Right cardiac atrium (tissue), 5 donors: ENCODE measurements at regions of chr1 and their contacts with region 1.

Region 1: DNA sequence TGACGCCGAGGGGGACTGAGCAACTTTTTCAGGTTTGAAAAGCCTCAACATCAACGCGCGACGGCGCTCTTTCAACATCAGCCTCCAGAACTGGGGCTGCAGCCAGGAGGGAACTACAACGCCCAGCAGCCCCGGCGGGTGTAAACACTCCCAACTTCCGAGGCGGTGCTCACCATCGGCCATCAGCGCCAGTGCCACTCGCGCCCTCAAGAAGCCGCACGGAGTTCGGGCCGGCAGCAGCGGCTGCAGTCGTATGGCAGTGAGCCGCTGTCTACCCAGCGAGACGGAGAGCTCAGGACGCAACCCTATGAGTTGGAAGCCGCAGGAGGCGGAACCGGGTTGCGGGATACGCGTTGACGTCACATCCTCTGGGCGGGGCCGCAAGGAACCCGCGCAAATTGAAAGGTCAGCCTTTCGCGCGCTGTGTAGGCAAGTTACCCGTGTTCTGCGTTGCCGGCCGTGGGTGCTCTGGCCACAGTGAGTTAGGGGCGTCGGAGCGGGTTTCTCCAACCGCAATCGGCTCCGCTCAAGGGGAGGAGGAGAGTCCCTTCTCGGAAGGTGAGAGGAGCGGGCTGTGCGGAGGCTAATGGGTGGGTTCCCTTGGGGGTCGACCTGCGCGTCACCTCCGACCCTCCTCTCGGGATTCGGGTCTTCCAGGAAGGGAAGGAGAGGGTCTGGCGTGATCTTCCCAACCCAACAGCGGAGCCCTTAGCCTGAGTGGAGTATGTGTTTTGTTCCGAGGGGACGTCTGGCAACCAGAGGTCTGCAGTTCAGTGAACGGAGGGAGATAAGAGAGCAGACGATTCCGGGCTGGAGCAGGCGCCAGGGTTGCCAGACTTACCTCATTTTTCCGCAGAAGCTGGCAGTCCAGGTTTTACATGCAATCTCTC is at the start of gene EXO1:
- DNase-seq: peak; percentile 91 to 95 (median 93)
- ATAC-seq: peak; percentile 99 to 100
- H3K4me3 ChIP-seq: peak within 1 kb of the TSS; percentile 78
- H3K27ac ChIP-seq: peak within 1 kb of the TSS; percentile 100
- H3K4me1 ChIP-seq: no peaks in the 10 kb centered on the region
- H3K27me3 ChIP-seq: no peaks in the 10 kb centered on the region
- total RNA-seq, gene EXO1: 0.74 to 0.83 TPM in 2 of 4 donors, not detected in the others

Region 2: DNA sequence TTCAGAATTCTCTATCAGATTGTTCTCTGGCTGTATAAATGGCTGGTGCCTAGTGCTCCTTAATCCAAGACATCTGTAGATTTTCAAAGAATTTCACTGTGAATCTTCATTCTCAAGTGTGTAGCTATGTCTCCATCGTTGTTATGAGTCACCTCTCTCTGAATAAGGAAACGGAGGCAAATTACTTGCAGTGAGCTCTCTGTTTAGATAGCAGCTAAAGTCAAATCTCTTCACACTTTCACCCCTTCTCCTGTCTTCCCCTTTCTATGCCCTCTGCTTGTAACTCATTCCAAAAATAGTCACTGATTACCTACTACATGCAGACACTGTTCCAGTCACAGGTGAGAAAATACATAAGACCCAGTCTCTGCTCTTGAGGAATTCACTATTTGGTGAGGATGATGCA is 247.5 kb before region 1 on chr1:
- intact Hi-C with region 1: loop called in 1 of 4 experiments (anchors 10 kb)
- DNase-seq: no peak
- ATAC-seq: no peak
- H3K4me3 ChIP-seq: no peak overlapping the region
- H3K27ac ChIP-seq: no peak overlapping the region
- H3K4me1 ChIP-seq: no peaks in the 10 kb centered on the region
- H3K27me3 ChIP-seq: no peaks in the 10 kb centered on the region